ENCODE measurements at regions of chr16 and their contacts with region 1.

Region 1: DNA sequence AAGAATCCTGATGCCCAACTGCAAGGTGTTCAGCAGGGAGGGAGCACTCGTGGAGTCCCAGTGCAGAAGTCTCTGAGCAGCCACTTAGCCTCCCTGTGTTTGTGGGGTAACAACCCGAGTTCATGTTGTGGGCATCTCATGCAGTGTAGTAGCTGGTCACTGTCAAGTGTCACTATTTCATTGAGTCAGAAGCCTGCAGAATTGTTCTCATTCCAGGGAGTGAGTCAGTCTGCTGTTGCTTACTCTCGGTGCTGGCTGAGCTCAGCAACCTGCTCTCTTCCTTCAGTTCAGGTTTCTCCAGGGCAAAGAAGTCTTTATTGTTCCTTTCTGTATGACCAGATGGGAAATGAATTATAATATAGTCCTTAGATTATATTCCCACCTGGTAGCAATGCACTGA is 24.1 kb downstream of the HMOX2 start:
- DNase-seq: peak; percentile 39
- ATAC-seq: peak; percentile 89
- H3K4me3 Mint-ChIP-seq: no peak overlapping the region
- H3K27ac Mint-ChIP-seq: no peak overlapping the region
- H3K4me1 Mint-ChIP-seq: peaks cover 82% of the 10 kb centered on the region
- H3K27me3 Mint-ChIP-seq: no peaks in the 10 kb centered on the region

Region 2: GRCh38 chr16:4435337-4436067 is 64.8 kb before region 1 on chr16:
- CTCF ChIA-PET with region 1: no interaction called
- POLR2A ChIA-PET with region 1: no interaction called
- intact Hi-C with region 1: no loop called
- DNase-seq: no peak
- ATAC-seq: no peak
- H3K4me3 Mint-ChIP-seq: no peak overlapping the region
- H3K27ac Mint-ChIP-seq: no peak overlapping the region
- H3K4me1 Mint-ChIP-seq: peaks cover 6% of the 10 kb centered on the region
- H3K27me3 Mint-ChIP-seq: no peaks in the 10 kb centered on the region

Region 3: DNA sequence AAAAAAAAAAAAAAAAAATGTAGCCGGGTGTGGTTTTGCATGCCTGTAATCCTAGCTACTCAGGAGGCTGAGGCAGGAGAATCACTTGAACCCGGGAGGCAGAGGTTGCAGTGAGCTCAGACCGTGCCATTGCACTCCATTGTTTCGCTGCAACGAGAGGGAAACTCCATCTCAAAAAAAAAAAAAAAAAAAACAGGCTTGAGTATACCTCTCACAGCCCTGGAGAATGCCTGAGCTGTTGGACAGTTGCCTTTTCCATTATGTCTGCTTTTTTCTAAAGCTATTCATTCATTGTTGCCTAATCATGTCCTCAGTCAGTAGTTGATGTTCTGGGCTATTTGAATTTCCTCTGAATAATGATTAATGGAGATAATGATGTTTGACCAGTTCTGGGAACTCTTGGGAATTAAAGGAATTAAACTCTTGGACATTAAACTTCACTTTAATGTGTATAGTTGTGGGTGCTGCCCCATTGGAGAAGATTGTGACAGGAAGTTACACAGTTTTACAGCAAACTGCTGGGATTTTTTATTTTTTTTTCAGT is 12.2 kb before region 1 on chr16:
- CTCF ChIA-PET with region 1: interaction called, 32 read pairs
- POLR2A ChIA-PET with region 1: interaction called, 3 read pairs
- intact Hi-C with region 1: no loop called
- DNase-seq: no peak
- ATAC-seq: peak; percentile 59
- H3K4me3 Mint-ChIP-seq: peak overlapping the region; percentile 2
- H3K27ac Mint-ChIP-seq: peak overlapping the region; percentile 92
- H3K4me1 Mint-ChIP-seq: peaks cover 56% of the 10 kb centered on the region
- H3K27me3 Mint-ChIP-seq: no peaks in the 10 kb centered on the region

Region 4: GRCh38 chr16:4538350-4539235 is 38.3 kb after region 1 on chr16 and contains the start of gene CDIP1:
- CTCF ChIA-PET with region 1: interaction called, 22 read pairs
- POLR2A ChIA-PET with region 1: no interaction called
- intact Hi-C with region 1: loop called in 1 of 2 experiments (anchors 5 kb)
- DNase-seq: peak; percentile 99
- ATAC-seq: peak; percentile 81
- H3K4me3 Mint-ChIP-seq: peak within 1 kb of the TSS; percentile 75
- H3K27ac Mint-ChIP-seq: peak within 1 kb of the TSS; percentile 63
- H3K4me1 Mint-ChIP-seq: peaks cover 41% of the 10 kb centered on the region
- H3K27me3 Mint-ChIP-seq: no peaks in the 10 kb centered on the region
- total RNA-seq, gene CDIP1: 28.3 to 30.2 TPM

Region 5: DNA sequence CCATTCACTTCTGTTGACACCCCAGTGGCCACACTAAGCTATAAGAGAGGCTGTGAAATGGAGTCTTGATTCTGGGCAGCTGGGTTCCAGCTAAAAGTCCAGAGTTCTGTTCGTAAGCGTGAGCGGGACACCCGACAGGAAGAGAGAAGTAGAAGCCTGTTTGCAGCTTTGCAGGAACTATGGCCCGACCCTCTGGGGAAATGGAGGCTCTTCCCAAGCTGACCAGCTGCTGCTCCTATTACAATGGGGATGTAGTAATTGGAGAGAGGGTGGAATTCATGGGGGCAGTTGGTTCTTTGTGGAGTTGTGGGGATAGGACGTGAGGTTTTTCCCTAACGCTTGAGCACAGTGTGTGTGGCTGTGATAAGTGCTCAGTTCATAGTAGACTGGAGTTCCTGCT is 86.0 kb after region 1 on chr16:
- CTCF ChIA-PET with region 1: interaction called, 44 read pairs
- POLR2A ChIA-PET with region 1: no interaction called
- intact Hi-C with region 1: no loop called
- DNase-seq: no peak
- ATAC-seq: no peak
- H3K4me3 Mint-ChIP-seq: no peak overlapping the region
- H3K27ac Mint-ChIP-seq: no peak overlapping the region
- H3K4me1 Mint-ChIP-seq: peaks cover 3% of the 10 kb centered on the region
- H3K27me3 Mint-ChIP-seq: peaks cover 3% of the 10 kb centered on the region